ENCODE measurements at regions of chr2 and their contacts with region 1.

Region 1: GRCh38 chr2:45452866-45453265 is 158.2 kb downstream of the SRBD1 start:
- DNase-seq: no peak
- H3K4me3 ChIP-seq: no peak overlapping the region
- H3K27ac ChIP-seq: no peak overlapping the region
- H3K4me1 ChIP-seq: peaks cover under 1% of the 10 kb centered on the region; the same call in 1 of the 2 replicates
- H3K27me3 ChIP-seq: no peaks in the 10 kb centered on the region
- CTCF ChIP-seq: no peak

Region 2: GRCh38 chr2:45195916-45196315 is 256.9 kb before region 1 on chr2:
- CTCF ChIA-PET with region 1: no interaction called
- POLR2A ChIA-PET with region 1: interaction called, 14 read pairs
- intact Hi-C with region 1: no loop called
- DNase-seq: no peak
- H3K4me3 ChIP-seq: no peak overlapping the region
- H3K27ac ChIP-seq: no peak overlapping the region
- H3K4me1 ChIP-seq: no peaks in the 10 kb centered on the region
- H3K27me3 ChIP-seq: no peaks in the 10 kb centered on the region
- CTCF ChIP-seq: no peak